Posterior vena cava (tissue), 2 donors: ENCODE measurements at regions of chr15 and their contacts with region 1.

Region 1: GRCh38 chr15:101269479-101270223 is 7.6 kb downstream of the SELENOS start:
- DNase-seq: no peak

Region 2: DNA sequence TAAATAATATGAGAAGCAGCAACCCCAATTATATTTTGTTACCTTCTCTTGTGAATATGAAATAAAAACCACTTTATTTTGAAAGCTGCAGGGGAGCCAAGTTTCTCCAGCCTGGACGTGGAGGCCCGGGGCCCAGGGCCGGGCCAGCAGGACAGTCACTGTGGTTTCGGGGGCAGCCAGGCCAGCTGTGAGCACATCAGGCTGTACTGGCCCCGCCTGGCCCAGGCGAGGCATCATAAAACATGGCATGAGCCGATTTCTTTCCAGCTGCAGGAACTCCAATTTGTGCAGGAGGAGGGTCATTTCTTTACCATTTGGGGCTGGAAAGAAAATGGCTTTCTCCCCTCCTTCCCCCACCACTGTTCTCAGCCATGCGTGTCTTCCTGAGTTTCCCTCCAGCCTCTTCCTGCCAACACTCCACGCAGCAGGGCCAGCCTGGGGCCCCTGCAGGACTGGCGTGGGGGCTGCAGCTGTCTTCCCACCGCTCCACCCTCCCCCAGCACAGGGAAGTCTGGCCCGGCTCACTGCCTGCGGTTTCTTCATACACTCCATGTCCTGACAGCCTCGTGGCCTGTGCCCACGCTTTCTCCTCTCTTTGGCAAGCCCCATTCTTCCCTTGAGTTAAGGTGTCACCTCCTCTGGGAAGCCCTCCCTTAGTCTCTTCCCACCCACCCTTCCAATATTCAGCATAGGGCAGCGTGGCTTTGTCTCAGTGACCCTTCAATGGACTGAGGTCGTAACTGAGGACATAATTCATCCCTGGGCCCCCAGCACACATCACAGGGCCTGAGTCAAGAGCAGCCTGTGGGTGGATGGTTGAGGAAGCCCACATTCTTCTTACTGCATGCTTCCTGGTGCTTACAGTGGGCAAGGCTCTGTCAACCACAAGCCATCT is 153.6 kb before region 1 on chr15:
- intact Hi-C with region 1: loop called in 1 of 2 experiments (anchors 10 kb)
- DNase-seq: peak; percentile 91

Region 3: DNA sequence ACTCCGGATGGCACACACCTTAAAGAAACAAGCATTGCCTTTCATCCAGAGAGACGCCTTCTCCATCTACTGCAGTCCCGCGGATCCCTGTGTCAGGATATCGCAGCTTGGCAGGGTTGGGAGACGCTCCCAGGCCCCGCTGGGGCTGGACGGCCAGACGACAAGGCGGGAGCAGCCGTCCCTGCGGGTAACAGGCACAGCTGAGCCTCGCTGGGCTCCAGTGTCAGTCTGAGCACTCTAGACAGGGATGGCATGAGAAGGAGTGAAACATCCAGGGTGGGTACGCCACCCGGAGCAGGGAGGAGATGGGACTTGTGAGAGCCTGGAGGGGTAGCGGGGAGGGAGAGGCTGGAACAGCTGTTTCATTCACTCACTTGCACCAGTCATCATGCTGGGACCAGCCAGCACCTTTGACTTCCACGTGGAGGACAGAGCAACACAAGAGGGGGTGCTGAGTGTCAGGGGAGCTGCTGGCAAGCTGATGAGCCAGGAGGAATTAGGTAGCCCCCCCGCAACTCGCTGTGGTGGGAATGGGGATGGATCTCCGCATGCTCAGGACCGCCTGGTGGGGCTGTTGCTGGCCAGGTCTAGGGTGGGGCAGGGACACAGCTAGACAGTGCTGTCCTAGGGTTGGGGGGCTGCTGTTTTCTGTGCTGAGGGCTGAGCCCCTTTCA is 56.9 kb after region 1 on chr15:
- intact Hi-C with region 1: no loop called
- DNase-seq: peak; percentile 62

Region 4: GRCh38 chr15:101348643-101349548 is 79.2 kb after region 1 on chr15:
- intact Hi-C with region 1: no loop called
- DNase-seq: no peak